ENCODE measurements at regions of chr3 and their contacts with region 1.

Region 1: GRCh38 chr3:121883507-121883906 is 10.7 kb upstream of the SLC15A2 start:
- DNase-seq: peak; percentile 35
- ATAC-seq: peak; percentile 71
- H3K4me3 ChIP-seq: no peak overlapping the region
- H3K27ac ChIP-seq: no peak overlapping the region
- H3K4me1 ChIP-seq: no peaks in the 10 kb centered on the region
- H3K27me3 ChIP-seq: no peaks in the 10 kb centered on the region
- CTCF ChIP-seq: peak; percentile 41
- EP300 ChIP-seq: no peak
- POLR2A ChIP-seq: no peak
- RAD21 ChIP-seq: no peak

Region 2: DNA sequence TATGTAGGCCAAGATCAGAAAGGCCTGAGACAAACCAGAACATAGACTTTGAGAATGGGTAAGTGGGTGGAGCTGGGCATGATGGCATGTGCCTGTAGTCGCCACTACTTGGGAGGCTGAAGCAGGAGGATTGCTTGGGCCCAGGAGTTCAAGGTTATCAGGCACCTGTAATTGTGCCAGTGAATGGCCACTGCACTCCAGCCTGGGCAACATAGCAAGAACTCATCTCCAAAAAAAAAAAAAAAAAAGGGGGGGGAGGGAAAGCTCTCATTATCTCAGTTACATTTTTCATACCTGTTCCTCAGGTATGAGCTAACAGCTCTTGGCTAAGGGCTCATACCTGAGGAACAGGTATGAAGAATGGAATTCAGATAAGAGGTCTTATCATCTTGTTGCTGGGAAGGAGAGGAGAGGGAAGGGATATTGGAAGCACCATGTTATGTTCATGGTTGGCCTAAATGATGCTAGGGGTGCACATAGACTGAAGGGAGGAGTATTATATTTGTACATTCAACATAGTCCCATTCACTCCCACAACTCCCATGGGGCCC is 13.2 kb after region 1 on chr3:
- CTCF ChIA-PET with region 1: no interaction called
- POLR2A ChIA-PET with region 1: no interaction called
- in situ Hi-C with region 1: no loop called
- intact Hi-C with region 1: no loop called
- DNase-seq: no peak
- ATAC-seq: no peak
- H3K4me3 ChIP-seq: no peak overlapping the region
- H3K27ac ChIP-seq: no peak overlapping the region
- H3K4me1 ChIP-seq: no peaks in the 10 kb centered on the region
- H3K27me3 ChIP-seq: no peaks in the 10 kb centered on the region
- CTCF ChIP-seq: no peak
- EP300 ChIP-seq: no peak
- POLR2A ChIP-seq: no peak
- RAD21 ChIP-seq: no peak

Region 3: GRCh38 chr3:121914081-121914998 is 30.8 kb after region 1 on chr3:
- CTCF ChIA-PET with region 1: no interaction called
- POLR2A ChIA-PET with region 1: no interaction called
- in situ Hi-C with region 1: no loop called
- intact Hi-C with region 1: no loop called
- DNase-seq: no peak
- ATAC-seq: no peak
- H3K4me3 ChIP-seq: no peak overlapping the region
- H3K27ac ChIP-seq: no peak overlapping the region
- H3K4me1 ChIP-seq: no peaks in the 10 kb centered on the region
- H3K27me3 ChIP-seq: no peaks in the 10 kb centered on the region
- CTCF ChIP-seq: no peak
- EP300 ChIP-seq: no peak
- POLR2A ChIP-seq: no peak
- RAD21 ChIP-seq: no peak

Region 4: GRCh38 chr3:121989943-121990342 is 106.4 kb after region 1 on chr3:
- CTCF ChIA-PET with region 1: interaction called, 3 read pairs
- POLR2A ChIA-PET with region 1: no interaction called
- in situ Hi-C with region 1: loop called (anchors 5 kb)
- intact Hi-C with region 1: loop called (anchors 2 kb)
- DNase-seq: no peak
- ATAC-seq: peak; percentile 41; the same call in 2 of the 3 replicates
- H3K4me3 ChIP-seq: no peak overlapping the region
- H3K27ac ChIP-seq: no peak overlapping the region
- H3K4me1 ChIP-seq: no peaks in the 10 kb centered on the region
- H3K27me3 ChIP-seq: no peaks in the 10 kb centered on the region; a peak in 1 of 5 replicates
- CTCF ChIP-seq: peak; percentile 43
- EP300 ChIP-seq: no peak
- POLR2A ChIP-seq: no peak
- RAD21 ChIP-seq: no peak

Region 5: GRCh38 chr3:121995161-121996137 is 111.9 kb after region 1 on chr3:
- CTCF ChIA-PET with region 1: interaction called, 3 read pairs
- POLR2A ChIA-PET with region 1: no interaction called
- in situ Hi-C with region 1: no loop called
- intact Hi-C with region 1: loop called (anchors 2 kb)
- DNase-seq: peak; percentile 52
- ATAC-seq: peak; percentile 99
- H3K4me3 ChIP-seq: no peak overlapping the region
- H3K27ac ChIP-seq: no peak overlapping the region
- H3K4me1 ChIP-seq: no peaks in the 10 kb centered on the region
- H3K27me3 ChIP-seq: no peaks in the 10 kb centered on the region
- CTCF ChIP-seq: peak; percentile 80
- EP300 ChIP-seq: no peak
- POLR2A ChIP-seq: no peak
- RAD21 ChIP-seq: peak; percentile 66

Measured in HepG2 (cell line).